ENCODE measurements at regions of chr2 and their contacts with region 1.

Region 1: GRCh38 chr2:37877457-37878315 is 47.4 kb upstream of the RMDN2 start:
- DNase-seq: peak; percentile 60
- H3K4me3 ChIP-seq: no peak overlapping the region
- H3K27ac ChIP-seq: no peak overlapping the region
- H3K4me1 ChIP-seq: no peaks in the 10 kb centered on the region
- H3K27me3 ChIP-seq: no peaks in the 10 kb centered on the region
- CTCF ChIP-seq: peak; percentile 67

Region 2: GRCh38 chr2:37832590-37833197 is 45.0 kb before region 1 on chr2:
- intact Hi-C with region 1: loop called (anchors 5 kb)
- DNase-seq: peak; percentile 94
- H3K4me3 ChIP-seq: no peak overlapping the region
- H3K27ac ChIP-seq: no peak overlapping the region
- H3K4me1 ChIP-seq: no peaks in the 10 kb centered on the region
- H3K27me3 ChIP-seq: no peaks in the 10 kb centered on the region
- CTCF ChIP-seq: peak; percentile 71